Gastrocnemius medialis (tissue), 4 donors: ENCODE measurements at regions of chr5 and their contacts with region 1.

Region 1: GRCh38 chr5:16539169-16539721 is 73.6 kb upstream of the ZNF622 start:
- DNase-seq: peak; percentile 96 to 97
- ATAC-seq: peak; percentile 86 to 94
- H3K4me3 ChIP-seq: peak overlapping the region; percentile 14 to 36 (median 30)
- H3K27ac ChIP-seq: peak overlapping the region; percentile 90 to 97 (median 94)
- H3K4me1 ChIP-seq: peaks cover 36 to 57% of the 10 kb centered on the region in 2 donors
- H3K27me3 ChIP-seq: no peaks in the 10 kb centered on the region
- CTCF ChIP-seq: peak in 1 of 5 experiments; percentile 34
- POLR2A ChIP-seq: peak; percentile 67 to 81

Region 2: GRCh38 chr5:16119790-16120189 is 419.5 kb before region 1 on chr5:
- in situ Hi-C with region 1: no loop called
- intact Hi-C with region 1: no loop called
- DNase-seq: no peak
- ATAC-seq: no peak
- H3K4me3 ChIP-seq: no peak overlapping the region
- H3K27ac ChIP-seq: no peak overlapping the region
- H3K4me1 ChIP-seq: no peaks in the 10 kb centered on the region
- H3K27me3 ChIP-seq: no peaks in the 10 kb centered on the region
- CTCF ChIP-seq: no peak
- POLR2A ChIP-seq: no peak

Region 3: DNA sequence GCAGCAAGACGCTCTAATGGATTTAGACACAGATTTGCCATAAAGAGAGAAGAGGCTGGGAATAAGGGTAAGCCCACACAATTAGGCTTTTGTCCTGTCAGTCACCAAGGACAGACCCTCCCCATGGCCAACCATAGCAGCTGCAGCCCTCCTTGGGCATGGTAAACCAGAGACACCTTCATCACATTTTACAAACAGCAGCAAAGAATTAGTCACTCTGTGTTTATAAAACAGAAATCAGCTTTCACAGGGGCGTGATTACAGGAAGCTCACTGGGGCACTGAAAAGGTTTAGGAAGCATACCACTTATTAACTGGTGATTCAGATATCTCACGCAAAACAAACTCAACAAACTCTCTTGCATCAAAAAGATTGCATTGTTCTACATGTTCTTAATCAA is 36.4 kb before region 1 on chr5:
- in situ Hi-C with region 1: loop called in 2 of 4 experiments (anchors 5 kb)
- intact Hi-C with region 1: no loop called
- DNase-seq: no peak
- ATAC-seq: no peak
- H3K4me3 ChIP-seq: peak overlapping the region in 3 of 4 donors; percentile 3 to 83 (median 10)
- H3K27ac ChIP-seq: peak overlapping the region; percentile 90 to 99 (median 96)
- H3K4me1 ChIP-seq: peaks cover 44 to 62% of the 10 kb centered on the region in 2 donors
- H3K27me3 ChIP-seq: no peaks in the 10 kb centered on the region
- CTCF ChIP-seq: no peak
- POLR2A ChIP-seq: no peak

Region 4: GRCh38 chr5:16508730-16509531 is 30.3 kb before region 1 on chr5:
- in situ Hi-C with region 1: loop called in 2 of 4 experiments (anchors 5 kb)
- intact Hi-C with region 1: loop called (anchors 1 kb)
- DNase-seq: peak; percentile 94 to 98
- ATAC-seq: peak; percentile 82 to 84
- H3K4me3 ChIP-seq: peak overlapping the region; percentile 51 to 83 (median 68)
- H3K27ac ChIP-seq: peak overlapping the region; percentile 90 to 99 (median 96)
- H3K4me1 ChIP-seq: peaks cover 8 to 17% of the 10 kb centered on the region in 2 donors
- H3K27me3 ChIP-seq: no peaks in the 10 kb centered on the region
- CTCF ChIP-seq: no peak
- POLR2A ChIP-seq: peak; percentile 92 to 97

Region 5: DNA sequence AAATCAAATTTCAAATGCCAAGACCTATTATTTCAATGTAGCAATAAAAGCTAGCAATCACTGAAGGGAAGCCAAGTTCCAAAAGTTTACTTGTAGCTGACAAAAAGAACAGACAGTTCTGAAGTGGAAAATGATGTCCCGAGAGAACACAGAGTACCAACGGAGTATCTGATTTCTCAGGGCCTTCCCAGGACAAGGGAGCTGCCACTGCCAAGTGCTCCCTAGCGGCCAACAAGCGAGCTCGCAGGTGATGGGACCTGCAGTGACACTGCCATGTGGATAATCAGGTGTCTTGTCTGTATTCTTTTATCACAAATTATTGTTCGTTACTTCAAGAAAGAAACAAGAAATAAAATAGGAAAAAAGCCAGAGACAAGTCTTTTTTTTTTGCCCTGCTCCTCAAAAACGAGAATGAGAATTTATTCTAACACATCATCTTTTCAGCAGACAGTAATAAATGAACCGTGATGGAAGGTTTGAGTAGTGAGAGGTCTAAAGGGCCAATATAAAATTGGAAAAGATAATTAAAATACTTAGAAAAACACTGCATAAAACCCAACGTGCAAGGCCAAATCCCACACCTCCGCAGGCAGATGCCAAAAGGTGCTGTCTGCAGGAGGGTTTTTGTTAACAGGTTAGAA is 237.5 kb after region 1 on chr5:
- in situ Hi-C with region 1: no loop called
- intact Hi-C with region 1: loop called (anchors 2 kb)
- DNase-seq: peak; percentile 87 to 93
- ATAC-seq: peak; percentile 89 to 93
- H3K4me3 ChIP-seq: no peak overlapping the region
- H3K27ac ChIP-seq: peak overlapping the region; percentile 80 to 88 (median 82)
- H3K4me1 ChIP-seq: peaks cover 29 to 34% of the 10 kb centered on the region in 2 donors
- H3K27me3 ChIP-seq: no peaks in the 10 kb centered on the region
- CTCF ChIP-seq: peak; percentile 55 to 78 (median 67)
- POLR2A ChIP-seq: no peak